WTC11 (cell line): ENCODE measurements at regions of chr17 and their contacts with region 1.

Region 1: GRCh38 chr17:79045842-79046196 is 21.9 kb downstream of the C1QTNF1 start:
- DNase-seq: peak; percentile 84
- ATAC-seq: peak; percentile 86
- H3K4me3 Mint-ChIP-seq: no peak overlapping the region
- H3K27ac Mint-ChIP-seq: no peak overlapping the region
- H3K4me1 Mint-ChIP-seq: peaks cover 6% of the 10 kb centered on the region; the same call in 1 of the 2 replicates
- H3K27me3 Mint-ChIP-seq: peaks cover 7% of the 10 kb centered on the region
- CTCF ChIP-seq: peak; percentile 81

Region 2: DNA sequence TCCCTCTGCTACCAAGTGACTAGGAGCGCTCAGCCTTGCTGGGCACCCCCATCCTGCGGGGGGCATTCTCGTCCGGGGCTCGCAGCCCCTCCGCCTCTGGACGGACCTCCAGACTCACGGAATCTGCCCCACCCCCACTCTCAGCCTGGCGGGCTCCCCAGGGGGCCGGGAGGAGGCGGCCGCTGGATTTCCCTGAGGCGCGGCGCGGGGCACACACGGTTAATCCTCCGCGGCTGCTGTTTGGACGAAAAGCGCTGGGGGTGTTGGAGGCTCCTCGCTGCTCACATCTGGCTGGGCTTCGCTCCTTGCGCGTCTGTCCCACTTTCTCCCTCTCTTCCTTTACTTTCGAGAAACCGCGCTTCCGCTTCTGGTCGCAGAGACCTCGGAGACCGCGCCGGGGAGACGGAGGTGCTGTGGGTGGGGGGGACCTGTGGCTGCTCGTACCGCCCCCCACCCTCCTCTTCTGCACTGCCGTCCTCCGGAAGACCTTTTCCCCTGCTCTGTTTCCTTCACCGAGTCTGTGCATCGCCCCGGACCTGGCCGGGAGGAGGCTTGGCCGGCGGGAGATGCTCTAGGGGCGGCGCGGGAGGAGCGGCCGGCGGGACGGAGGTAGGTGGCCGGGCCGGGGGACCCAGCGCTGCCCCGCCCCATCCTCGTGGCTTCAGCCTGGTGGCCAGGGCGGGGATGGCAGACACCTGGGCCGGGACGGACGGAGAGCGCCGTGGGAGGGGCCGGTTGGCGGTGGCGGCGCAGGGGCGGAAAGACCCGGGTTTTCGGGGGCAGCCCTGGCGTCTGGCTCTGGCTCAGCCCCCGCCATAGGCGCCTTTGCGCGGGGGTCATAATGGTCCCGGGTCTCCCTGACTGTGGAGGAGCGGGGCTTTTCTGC is 21.7 kb before region 1 on chr17 and contains the start of gene C1QTNF1:
- CTCF ChIA-PET with region 1: interaction called, 51 read pairs
- POLR2A ChIA-PET with region 1: no interaction called
- DNase-seq: peak; percentile 70
- ATAC-seq: peak; percentile 80
- H3K4me3 Mint-ChIP-seq: peak within 1 kb of the TSS; percentile 84
- H3K27ac Mint-ChIP-seq: no peak within 1 kb of the TSS
- H3K4me1 Mint-ChIP-seq: peaks cover 14% of the 10 kb centered on the region
- H3K27me3 Mint-ChIP-seq: peaks cover 89% of the 10 kb centered on the region
- CTCF ChIP-seq: peak; percentile 24; the same call in 1 of the 2 replicates
- total RNA-seq, gene C1QTNF1: 1.5 to 2.7 TPM (median 1.7 TPM) in 3 replicates

Region 3: DNA sequence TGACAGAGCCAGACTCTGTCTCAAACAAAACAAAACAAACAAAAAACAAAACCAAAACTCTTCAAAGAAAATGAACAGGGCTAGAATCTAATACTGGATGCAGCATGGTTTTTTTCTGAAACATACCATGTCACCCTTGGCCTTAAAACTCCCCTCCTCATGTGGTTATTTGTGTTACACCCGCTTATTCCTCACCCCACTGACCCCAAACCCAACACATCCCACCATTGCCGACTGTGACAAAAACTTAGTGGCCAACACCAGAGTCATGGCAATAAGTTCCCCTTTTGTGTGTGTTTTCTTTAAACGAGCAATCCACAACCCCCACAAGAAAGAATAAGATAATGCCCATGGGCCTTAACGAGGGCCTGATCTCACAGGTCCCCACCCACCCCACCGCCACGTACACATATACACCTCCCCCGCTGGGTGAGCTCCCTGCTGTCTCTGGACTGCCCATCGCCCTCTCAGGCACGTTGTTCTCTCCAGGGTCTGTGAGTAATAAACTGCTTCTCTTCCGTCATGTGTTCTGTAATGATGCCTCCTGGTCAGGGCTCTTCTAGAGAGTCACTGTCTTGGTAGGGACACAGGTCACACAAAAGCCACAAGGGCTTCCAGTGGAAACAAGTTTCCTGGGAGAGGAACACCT is 12.0 kb after region 1 on chr17:
- CTCF ChIA-PET with region 1: interaction called, 27 read pairs
- POLR2A ChIA-PET with region 1: no interaction called
- DNase-seq: no peak
- ATAC-seq: no peak
- H3K4me3 Mint-ChIP-seq: no peak overlapping the region
- H3K27ac Mint-ChIP-seq: no peak overlapping the region
- H3K4me1 Mint-ChIP-seq: no peaks in the 10 kb centered on the region
- H3K27me3 Mint-ChIP-seq: peaks cover 18% of the 10 kb centered on the region
- CTCF ChIP-seq: no peak

Region 4: GRCh38 chr17:79065105-79065670 is 19.4 kb after region 1 on chr17:
- CTCF ChIA-PET with region 1: interaction called, 27 read pairs
- POLR2A ChIA-PET with region 1: no interaction called
- DNase-seq: peak; percentile 70
- ATAC-seq: no peak
- H3K4me3 Mint-ChIP-seq: no peak overlapping the region
- H3K27ac Mint-ChIP-seq: no peak overlapping the region
- H3K4me1 Mint-ChIP-seq: no peaks in the 10 kb centered on the region
- H3K27me3 Mint-ChIP-seq: no peaks in the 10 kb centered on the region; the same call in none of the 2 replicates
- CTCF ChIP-seq: peak; percentile 63

Region 5: GRCh38 chr17:79074650-79075445 is 29.0 kb after region 1 on chr17 and contains the start of gene ENGASE:
- CTCF ChIA-PET with region 1: interaction called, 18 read pairs
- POLR2A ChIA-PET with region 1: no interaction called
- DNase-seq: peak; percentile 94
- ATAC-seq: peak; percentile 98
- H3K4me3 Mint-ChIP-seq: peak within 1 kb of the TSS; percentile 76
- H3K27ac Mint-ChIP-seq: peak within 1 kb of the TSS; percentile 72
- H3K4me1 Mint-ChIP-seq: peaks cover 7% of the 10 kb centered on the region
- H3K27me3 Mint-ChIP-seq: peaks cover 17% of the 10 kb centered on the region
- CTCF ChIP-seq: no peak
- total RNA-seq, gene ENGASE: 40.0 to 47.5 TPM (median 41.6 TPM) in 3 replicates

Region 6: GRCh38 chr17:79082311-79083190 is 36.7 kb after region 1 on chr17:
- CTCF ChIA-PET with region 1: interaction called, 21 read pairs
- POLR2A ChIA-PET with region 1: interaction called, 3 read pairs
- DNase-seq: peak; percentile 86
- ATAC-seq: peak; percentile 82
- H3K4me3 Mint-ChIP-seq: no peak overlapping the region
- H3K27ac Mint-ChIP-seq: no peak overlapping the region
- H3K4me1 Mint-ChIP-seq: no peaks in the 10 kb centered on the region
- H3K27me3 Mint-ChIP-seq: no peaks in the 10 kb centered on the region
- CTCF ChIP-seq: peak; percentile 77

Region 7: DNA sequence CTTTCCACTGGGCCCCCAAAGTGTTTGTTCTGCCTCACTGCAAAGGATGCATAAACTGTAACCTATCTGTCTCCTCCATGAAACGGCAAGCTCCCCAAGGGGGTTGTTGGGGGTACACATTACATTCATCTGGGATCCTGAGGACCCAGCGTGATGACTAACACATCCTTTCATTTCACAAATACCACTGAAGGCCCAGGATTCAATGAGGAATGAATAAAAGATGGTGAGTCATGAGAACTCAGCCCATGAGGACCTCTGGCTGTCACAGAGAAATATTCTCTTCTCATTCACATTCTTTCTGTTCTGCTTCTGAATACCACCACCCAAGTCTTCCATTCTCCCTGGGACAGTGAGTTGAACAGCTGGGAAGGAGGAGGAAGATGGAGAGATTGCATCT is 415.2 kb after region 1 on chr17:
- CTCF ChIA-PET with region 1: no interaction called
- POLR2A ChIA-PET with region 1: no interaction called
- DNase-seq: no peak
- ATAC-seq: no peak
- H3K4me3 Mint-ChIP-seq: no peak overlapping the region
- H3K27ac Mint-ChIP-seq: no peak overlapping the region
- H3K4me1 Mint-ChIP-seq: peaks cover 9% of the 10 kb centered on the region
- H3K27me3 Mint-ChIP-seq: no peaks in the 10 kb centered on the region
- CTCF ChIP-seq: no peak